GM10248 (cell line): ENCODE measurements at regions of chr1 and their contacts with region 1.

Region 1: DNA sequence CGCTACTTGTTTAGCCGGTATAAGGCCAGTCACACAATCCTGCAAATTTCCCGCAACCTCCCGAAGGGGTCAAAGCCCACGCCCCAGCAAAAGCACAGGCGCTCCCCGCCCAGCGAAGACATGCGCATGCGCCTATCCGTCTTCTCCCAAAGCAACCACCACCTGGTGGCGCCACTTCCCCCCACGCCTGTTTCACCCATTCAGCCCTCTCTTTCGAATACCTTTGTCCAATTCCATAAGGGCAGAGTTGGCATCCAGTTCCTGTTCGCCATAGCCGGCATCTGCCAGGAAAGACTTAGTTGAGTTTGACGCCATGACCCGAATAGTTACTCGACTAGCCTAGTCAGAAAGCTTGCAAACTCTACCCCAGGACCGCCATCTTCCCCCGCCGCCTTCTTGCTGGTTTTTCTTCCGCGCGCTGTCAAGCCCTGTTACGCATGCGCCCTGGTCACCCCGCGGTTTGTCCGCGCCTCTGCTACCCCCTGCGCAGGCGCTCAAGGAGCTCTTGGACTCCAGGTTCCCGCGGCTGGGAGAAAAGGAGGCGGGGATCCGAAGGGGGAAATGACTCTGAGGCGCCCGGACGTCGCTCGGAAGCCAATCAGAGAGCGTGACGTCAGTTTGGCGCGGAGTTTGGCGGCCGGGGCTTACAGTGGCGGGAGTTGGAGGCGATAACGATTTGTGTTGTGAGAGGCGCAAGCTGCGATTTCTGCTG is at the starts of genes DTL and INTS7:
- DNase-seq: peak; percentile 98
- CTCF ChIP-seq: peak; percentile 80

Region 2: DNA sequence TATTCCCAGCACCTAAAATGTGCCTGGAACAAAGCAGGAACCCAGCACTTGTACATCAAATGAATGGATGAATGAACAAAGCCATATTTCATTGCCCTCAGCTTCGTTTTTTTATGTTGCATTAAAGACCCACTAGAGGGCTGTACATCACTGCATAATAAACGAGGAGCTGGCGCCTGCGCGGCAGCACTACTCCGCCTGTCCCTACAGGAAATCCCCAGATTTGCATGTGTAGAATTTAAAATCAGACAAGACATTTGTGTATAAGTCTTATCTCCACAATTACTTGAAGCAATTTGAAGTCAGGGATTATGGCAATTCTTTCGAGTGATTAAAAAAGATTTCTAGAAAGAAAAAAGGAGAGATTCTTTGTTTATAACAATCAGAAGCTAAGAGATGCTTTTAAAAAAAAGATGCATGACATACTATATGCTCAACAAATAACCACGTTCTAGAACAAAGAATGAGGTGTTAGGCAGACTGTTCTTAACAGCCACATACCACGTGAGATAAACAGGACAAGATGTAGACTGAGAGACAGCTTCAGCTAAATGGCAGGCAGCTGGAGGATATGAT is 354.4 kb before region 1 on chr1:
- CTCF ChIA-PET with region 1: interaction called, 133 read pairs
- POLR2A ChIA-PET with region 1: no interaction called
- DNase-seq: peak; percentile 79
- CTCF ChIP-seq: peak; percentile 64

Region 3: GRCh38 chr1:212012034-212012740 is 23.1 kb before region 1 on chr1:
- CTCF ChIA-PET with region 1: interaction called, 61 read pairs
- POLR2A ChIA-PET with region 1: no interaction called
- DNase-seq: peak; percentile 70
- CTCF ChIP-seq: peak; percentile 92

Region 4: GRCh38 chr1:212045981-212046380 is 10.7 kb after region 1 on chr1:
- CTCF ChIA-PET with region 1: interaction called, 77 read pairs
- POLR2A ChIA-PET with region 1: no interaction called
- DNase-seq: no peak
- CTCF ChIP-seq: no peak

Region 5: GRCh38 chr1:212070720-212071302 is 35.5 kb after region 1 on chr1:
- CTCF ChIA-PET with region 1: interaction called, 15 read pairs
- POLR2A ChIA-PET with region 1: no interaction called
- DNase-seq: peak; percentile 32
- CTCF ChIP-seq: peak; percentile 63

Region 6: GRCh38 chr1:212291505-212292134 is 256.3 kb after region 1 on chr1:
- CTCF ChIA-PET with region 1: interaction called, 13 read pairs
- POLR2A ChIA-PET with region 1: no interaction called
- DNase-seq: peak; percentile 37
- CTCF ChIP-seq: peak; percentile 68